IMR-90 (cell line): ENCODE measurements at regions of chr19 and their contacts with region 1.

Region 1: GRCh38 chr19:58278157-58279041 is at the start of gene ZNF8:
- DNase-seq: peak; percentile 98
- ATAC-seq: peak; percentile 94
- H3K4me3 ChIP-seq: peak within 1 kb of the TSS; percentile 65
- H3K27ac ChIP-seq: peak within 1 kb of the TSS; percentile 79
- H3K4me1 ChIP-seq: 0 out of 2 replicates have a peak, but pooled peaks cover 2% of the 10 kb centered on the region
- H3K27me3 ChIP-seq: no peaks in the 10 kb centered on the region
- CTCF ChIP-seq: no peak; the same call in 1 of the 2 replicates
- POLR2A ChIP-seq: peak; percentile 67; the same call in 1 of the 2 replicates
- RAD21 ChIP-seq: peak; percentile 16
- total RNA-seq, gene ZNF8: 3.9 and 4.4 TPM in 2 replicates

Region 2: DNA sequence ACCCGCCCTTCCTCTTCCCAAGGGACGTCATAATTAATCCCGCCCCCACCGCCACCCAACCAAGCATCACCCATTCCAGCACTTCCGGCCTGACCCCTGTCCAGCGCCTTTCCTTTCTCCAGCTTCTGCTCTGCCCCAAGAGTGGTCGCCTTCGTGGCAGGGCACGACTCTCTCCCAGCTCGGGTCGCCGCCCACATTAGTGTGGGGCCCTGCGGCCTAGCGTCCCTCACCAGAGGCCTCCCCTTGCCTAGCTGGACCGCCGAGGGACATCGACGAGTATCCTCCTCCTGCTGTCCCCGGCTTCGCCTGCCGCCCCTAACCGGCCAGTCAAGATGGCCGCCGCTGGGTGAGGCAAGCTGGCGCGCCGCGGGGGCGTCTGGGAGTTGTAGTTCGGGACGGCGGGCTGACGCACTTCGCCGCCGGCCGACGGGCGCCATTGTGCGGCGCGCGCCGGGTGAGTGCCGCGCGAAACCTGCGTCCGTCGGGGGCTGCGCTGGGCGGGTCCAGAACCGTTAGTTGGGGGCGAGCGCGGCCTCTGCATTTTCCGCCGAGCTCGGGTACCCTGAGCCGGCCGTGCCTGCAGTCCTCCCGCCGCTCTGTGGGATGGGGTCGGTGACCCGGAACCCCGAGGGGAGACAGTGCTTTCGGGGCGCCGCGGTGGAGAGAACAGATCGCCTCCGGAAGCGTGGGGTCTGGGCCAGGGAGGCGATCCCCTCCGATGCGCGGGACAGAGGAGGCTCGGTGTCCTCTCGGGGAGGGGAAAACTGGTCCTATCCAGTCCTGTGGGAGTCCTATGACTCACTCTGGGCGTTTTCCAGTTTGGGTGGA is 95.2 kb before region 1 on chr19 and contains the start of gene ZNF274:
- CTCF ChIA-PET with region 1: no interaction called
- POLR2A ChIA-PET with region 1: no interaction called
- dilution Hi-C with region 1: no loop called
- in situ Hi-C with region 1: no loop called
- intact Hi-C with region 1: loop called (anchors 5 kb)
- DNase-seq: peak; percentile 87
- ATAC-seq: peak; percentile 99
- H3K4me3 ChIP-seq: peak within 1 kb of the TSS; percentile 98
- H3K27ac ChIP-seq: peak within 1 kb of the TSS; percentile 100
- H3K4me1 ChIP-seq: no peaks in the 10 kb centered on the region
- H3K27me3 ChIP-seq: no peaks in the 10 kb centered on the region
- CTCF ChIP-seq: no peak
- POLR2A ChIP-seq: peak; percentile 88
- RAD21 ChIP-seq: no peak
- total RNA-seq, gene ZNF274: 12.5 and 15.2 TPM in 2 replicates

Region 3: GRCh38 chr19:58196901-58197616 is 81.3 kb before region 1 on chr19:
- CTCF ChIA-PET with region 1: no interaction called
- POLR2A ChIA-PET with region 1: no interaction called
- dilution Hi-C with region 1: no loop called
- in situ Hi-C with region 1: no loop called
- intact Hi-C with region 1: no loop called
- DNase-seq: peak; percentile 13
- ATAC-seq: no peak
- H3K4me3 ChIP-seq: no peak overlapping the region
- H3K27ac ChIP-seq: no peak overlapping the region
- H3K4me1 ChIP-seq: no peaks in the 10 kb centered on the region
- H3K27me3 ChIP-seq: no peaks in the 10 kb centered on the region
- CTCF ChIP-seq: no peak
- POLR2A ChIP-seq: no peak
- RAD21 ChIP-seq: no peak

Region 4: DNA sequence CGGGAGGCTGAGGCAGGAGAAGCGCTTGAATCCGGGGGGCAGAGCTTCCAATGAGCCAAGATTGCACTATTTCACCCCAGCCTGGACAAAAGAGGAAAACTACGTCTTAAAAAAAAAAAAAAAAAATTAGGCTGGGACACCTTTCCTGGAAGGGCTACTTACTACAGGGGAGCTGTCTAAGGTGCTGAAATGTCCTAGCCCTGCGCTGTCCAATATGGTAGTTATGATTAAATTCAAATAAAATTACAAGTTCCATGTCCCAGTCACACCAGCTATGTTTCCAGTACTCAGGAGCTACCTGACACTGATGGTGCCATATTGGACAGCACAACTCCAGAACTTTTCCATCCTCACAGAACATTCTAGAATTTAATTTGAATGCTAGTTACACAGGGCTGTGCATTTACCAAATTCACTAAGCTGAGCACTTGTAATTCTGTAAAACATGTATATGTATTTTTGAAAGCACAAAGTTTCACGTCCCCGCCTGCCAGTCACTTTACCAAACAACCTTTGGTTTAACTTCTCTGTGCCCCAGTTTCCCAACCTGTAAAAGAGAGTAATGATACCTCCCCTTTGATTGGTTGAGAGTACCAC is 39.2 kb after region 1 on chr19:
- CTCF ChIA-PET with region 1: no interaction called
- POLR2A ChIA-PET with region 1: no interaction called
- dilution Hi-C with region 1: no loop called
- in situ Hi-C with region 1: no loop called
- intact Hi-C with region 1: no loop called
- DNase-seq: peak; percentile 59
- ATAC-seq: peak; percentile 89
- H3K4me3 ChIP-seq: no peak overlapping the region
- H3K27ac ChIP-seq: no peak overlapping the region
- H3K4me1 ChIP-seq: no peaks in the 10 kb centered on the region
- H3K27me3 ChIP-seq: no peaks in the 10 kb centered on the region
- CTCF ChIP-seq: no peak
- POLR2A ChIP-seq: no peak
- RAD21 ChIP-seq: no peak